GM12878 (cell line): ENCODE measurements at regions of chr19 and their contacts with region 1.

Region 1: DNA sequence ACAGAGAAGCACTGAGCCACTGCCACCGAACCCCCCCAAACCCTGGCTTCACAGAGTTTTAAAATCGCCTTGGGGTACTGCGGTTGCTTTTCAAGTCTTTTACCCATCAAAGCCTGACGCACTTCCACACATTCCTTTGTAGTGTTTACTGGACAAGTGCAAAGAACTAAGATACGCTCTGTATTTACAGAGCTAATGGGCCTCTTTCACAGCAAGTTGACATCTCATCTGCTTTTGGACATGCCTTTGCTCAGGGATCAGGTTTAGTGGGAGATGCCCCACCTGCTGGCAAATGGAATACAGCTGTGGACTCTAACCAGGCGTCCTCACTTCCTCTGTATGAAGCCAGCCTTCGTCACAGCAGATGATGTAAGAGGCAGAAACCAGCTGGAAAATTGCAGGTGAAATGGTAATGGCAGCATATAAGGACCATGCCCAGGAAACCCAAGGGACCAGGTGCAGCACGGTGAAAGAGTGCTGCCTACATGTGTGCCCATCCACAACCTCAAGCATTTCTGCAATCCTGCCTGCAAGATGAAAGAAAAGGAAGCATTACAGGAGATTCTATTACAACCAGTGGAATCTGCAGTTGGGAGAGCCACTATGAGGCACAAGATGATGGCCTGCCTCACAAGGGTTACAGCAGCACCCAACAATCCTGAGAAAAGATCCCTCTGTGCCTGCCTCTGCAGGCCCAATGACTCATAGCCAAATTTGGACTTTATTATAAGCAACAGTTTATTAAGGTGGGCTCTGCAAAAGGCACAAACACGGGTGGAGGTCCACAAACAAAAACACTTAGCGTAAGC is 34.7 kb downstream of the BRD4 start:
- DNase-seq: no peak
- ATAC-seq: no peak
- H3K4me3 ChIP-seq: no peak overlapping the region
- H3K27ac ChIP-seq: no peak overlapping the region
- H3K4me1 ChIP-seq: peaks cover 31% of the 10 kb centered on the region
- H3K27me3 ChIP-seq: no peaks in the 10 kb centered on the region
- CTCF ChIP-seq: no peak
- EP300 ChIP-seq: no peak
- POLR2A ChIP-seq: no peak
- RAD21 ChIP-seq: no peak

Region 2: GRCh38 chr19:15253513-15253921 is 44.1 kb before region 1 on chr19:
- CTCF ChIA-PET with region 1: no interaction called
- POLR2A ChIA-PET with region 1: no interaction called
- RAD21 ChIA-PET with region 1: no interaction called
- SMC1A ChIA-PET with region 1: no interaction called
- in situ Hi-C with region 1: no loop called
- intact Hi-C with region 1: no loop called
- DNase-seq: no peak
- ATAC-seq: no peak
- H3K4me3 ChIP-seq: no peak overlapping the region
- H3K27ac ChIP-seq: no peak overlapping the region
- H3K4me1 ChIP-seq: no peaks in the 10 kb centered on the region
- H3K27me3 ChIP-seq: no peaks in the 10 kb centered on the region
- CTCF ChIP-seq: no peak
- EP300 ChIP-seq: no peak
- POLR2A ChIP-seq: peak; percentile 58
- RAD21 ChIP-seq: no peak

Region 3: GRCh38 chr19:15280915-15281683 is 16.5 kb before region 1 on chr19:
- CTCF ChIA-PET with region 1: no interaction called
- POLR2A ChIA-PET with region 1: no interaction called
- RAD21 ChIA-PET with region 1: no interaction called
- SMC1A ChIA-PET with region 1: interaction called, 16 read pairs
- in situ Hi-C with region 1: no loop called
- intact Hi-C with region 1: no loop called
- DNase-seq: no peak
- ATAC-seq: no peak
- H3K4me3 ChIP-seq: no peak overlapping the region
- H3K27ac ChIP-seq: no peak overlapping the region
- H3K4me1 ChIP-seq: peaks cover 35% of the 10 kb centered on the region
- H3K27me3 ChIP-seq: no peaks in the 10 kb centered on the region
- CTCF ChIP-seq: no peak
- EP300 ChIP-seq: no peak
- POLR2A ChIP-seq: no peak
- RAD21 ChIP-seq: no peak

Region 4: DNA sequence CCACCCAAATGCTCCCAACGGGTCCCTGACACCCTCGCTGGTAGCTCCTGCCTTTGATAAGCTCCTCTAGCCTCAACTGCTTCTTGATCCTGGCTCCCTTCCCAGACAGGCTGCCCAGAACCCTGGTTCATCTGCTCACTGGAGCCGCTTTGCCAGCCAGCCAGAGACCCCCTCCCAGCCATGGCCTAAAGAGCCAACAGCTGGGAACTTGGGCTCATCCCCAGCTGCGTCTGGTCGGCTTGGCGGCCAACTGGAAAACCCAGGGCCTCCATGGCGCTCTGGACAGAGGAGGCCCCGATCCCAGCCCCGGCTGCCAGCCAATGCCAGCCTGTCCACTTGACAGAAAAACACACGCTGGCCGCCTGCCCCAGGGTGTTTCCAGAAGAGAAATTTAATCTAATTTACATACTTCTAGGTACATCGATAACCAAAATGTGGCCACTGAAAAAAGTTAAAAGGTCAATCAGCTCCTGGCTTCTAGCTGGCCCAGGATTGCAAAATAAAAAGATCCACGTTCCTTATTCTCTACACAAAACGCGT is 124.2 kb after region 1 on chr19:
- CTCF ChIA-PET with region 1: no interaction called
- POLR2A ChIA-PET with region 1: no interaction called
- RAD21 ChIA-PET with region 1: no interaction called
- SMC1A ChIA-PET with region 1: no interaction called
- in situ Hi-C with region 1: no loop called
- intact Hi-C with region 1: no loop called
- DNase-seq: no peak
- ATAC-seq: no peak
- H3K4me3 ChIP-seq: no peak overlapping the region
- H3K27ac ChIP-seq: no peak overlapping the region
- H3K4me1 ChIP-seq: peaks cover 8% of the 10 kb centered on the region
- H3K27me3 ChIP-seq: no peaks in the 10 kb centered on the region
- CTCF ChIP-seq: no peak
- EP300 ChIP-seq: no peak
- POLR2A ChIP-seq: no peak
- RAD21 ChIP-seq: no peak

Region 5: DNA sequence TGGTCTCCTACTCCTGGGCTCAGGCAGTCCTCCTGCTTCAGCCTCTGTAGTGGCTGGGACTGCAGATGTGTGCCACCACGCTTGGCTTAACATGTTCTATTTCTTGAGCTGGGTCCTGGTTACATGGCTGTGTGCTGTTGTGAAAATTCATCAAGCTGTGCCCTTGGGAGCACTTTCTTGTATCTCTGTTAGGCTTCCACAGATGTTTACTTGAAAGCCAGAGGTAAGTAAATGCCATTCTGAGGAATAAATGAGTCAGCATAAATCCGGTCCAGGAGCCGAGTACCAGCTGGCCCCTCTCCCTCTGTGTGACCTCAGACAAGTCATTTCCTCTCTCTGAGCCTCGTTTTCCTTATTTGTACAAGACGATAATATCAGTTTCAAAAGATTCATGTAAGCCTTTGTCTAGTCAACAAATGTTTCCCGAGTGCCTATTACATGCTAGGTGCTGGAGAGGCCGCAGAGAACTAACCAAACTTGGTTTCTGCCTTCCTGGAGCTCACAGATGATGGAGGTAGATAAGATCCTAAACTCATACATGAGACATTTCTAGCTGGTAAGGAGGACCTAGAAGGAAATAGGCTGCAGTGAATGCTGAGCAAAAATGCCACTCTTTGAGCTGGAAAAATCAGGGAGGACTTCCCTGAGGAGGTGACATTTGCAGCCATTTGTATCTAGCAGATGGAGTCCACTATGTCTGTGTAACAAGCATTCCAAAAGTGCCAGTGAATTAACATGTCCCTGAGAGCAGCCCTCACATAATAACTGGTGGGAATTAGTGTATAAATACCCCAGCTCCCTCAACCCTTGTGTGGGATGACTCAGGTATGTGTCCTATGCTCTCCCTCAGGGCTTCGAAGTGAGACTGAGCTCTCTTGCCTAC is 169.5 kb after region 1 on chr19:
- CTCF ChIA-PET with region 1: no interaction called
- POLR2A ChIA-PET with region 1: no interaction called
- RAD21 ChIA-PET with region 1: no interaction called
- SMC1A ChIA-PET with region 1: no interaction called
- in situ Hi-C with region 1: no loop called
- intact Hi-C with region 1: no loop called
- DNase-seq: peak; percentile 97
- ATAC-seq: peak; percentile 71
- H3K4me3 ChIP-seq: peak overlapping the region; percentile 17; the same call in 1 of the 2 replicates
- H3K27ac ChIP-seq: peak overlapping the region; percentile 80
- H3K4me1 ChIP-seq: peaks cover 22% of the 10 kb centered on the region
- H3K27me3 ChIP-seq: no peaks in the 10 kb centered on the region
- CTCF ChIP-seq: no peak
- EP300 ChIP-seq: peak in 1 of 2 experiments; percentile 25; a peak in 1 of 4 replicates
- POLR2A ChIP-seq: no peak
- RAD21 ChIP-seq: no peak